Posterior vena cava (tissue), 2 donors: ENCODE measurements at regions of chr2 and their contacts with region 1.

Region 1: GRCh38 chr2:237026981-237027711 is 58.5 kb upstream of the COPS8 start:
- DNase-seq: peak; percentile 91

Region 2: DNA sequence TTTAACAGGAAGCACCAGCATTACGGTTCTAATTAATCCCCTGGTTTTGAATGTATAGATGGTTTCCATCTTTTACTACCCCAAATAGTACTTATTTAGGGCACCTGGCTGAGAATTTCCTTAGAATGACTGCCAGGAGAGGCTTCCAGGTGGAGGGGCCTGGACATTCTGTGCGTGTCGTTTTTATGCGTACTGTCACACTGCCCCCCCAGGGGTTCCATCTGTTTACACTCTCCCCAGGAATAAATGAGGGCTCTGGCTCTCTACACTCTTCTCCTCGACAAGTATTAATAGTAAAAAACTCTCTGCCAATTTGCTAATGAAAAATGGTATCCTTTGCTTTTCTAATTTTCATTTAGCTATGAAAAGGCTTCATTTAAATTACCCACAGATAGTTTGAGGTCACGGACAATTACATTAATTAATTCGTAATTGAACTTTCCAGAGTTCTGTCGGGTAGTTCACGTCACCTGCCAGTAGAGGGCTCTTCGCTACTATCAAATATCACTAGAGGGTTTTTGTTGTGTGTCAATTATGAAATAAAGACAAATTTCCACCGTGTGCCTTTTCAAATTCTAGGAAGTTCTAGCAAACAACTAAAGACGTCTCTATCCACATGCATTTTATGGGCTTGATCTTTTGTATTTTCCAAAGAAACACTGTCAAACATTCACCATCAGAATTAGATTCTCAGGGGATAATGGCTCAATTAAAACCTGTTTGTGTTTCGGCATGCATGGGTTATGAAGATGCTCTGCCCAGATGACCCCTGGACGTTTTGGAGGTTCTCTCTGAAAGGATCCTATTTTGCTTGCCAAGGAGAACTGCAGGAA is 674.2 kb before region 1 on chr2:
- intact Hi-C with region 1: loop called in 1 of 2 experiments (anchors 2 kb)
- DNase-seq: no peak

Region 3: GRCh38 chr2:236569573-236569973 is 457.6 kb before region 1 on chr2 and contains the start of gene ACKR3:
- intact Hi-C with region 1: loop called in 1 of 2 experiments (anchors 5 kb)
- DNase-seq: peak; percentile 93
- total RNA-seq, gene ACKR3: 124 to 132 TPM

Region 4: GRCh38 chr2:236904389-236905280 is 122.5 kb before region 1 on chr2:
- intact Hi-C with region 1: loop called in 1 of 2 experiments (anchors 10 kb)
- DNase-seq: no peak

Region 5: GRCh38 chr2:237181844-237182243 is 154.7 kb after region 1 on chr2:
- intact Hi-C with region 1: no loop called
- DNase-seq: no peak